A673 (cell line): ENCODE measurements at regions of chr7 and their contacts with region 1.

Region 1: DNA sequence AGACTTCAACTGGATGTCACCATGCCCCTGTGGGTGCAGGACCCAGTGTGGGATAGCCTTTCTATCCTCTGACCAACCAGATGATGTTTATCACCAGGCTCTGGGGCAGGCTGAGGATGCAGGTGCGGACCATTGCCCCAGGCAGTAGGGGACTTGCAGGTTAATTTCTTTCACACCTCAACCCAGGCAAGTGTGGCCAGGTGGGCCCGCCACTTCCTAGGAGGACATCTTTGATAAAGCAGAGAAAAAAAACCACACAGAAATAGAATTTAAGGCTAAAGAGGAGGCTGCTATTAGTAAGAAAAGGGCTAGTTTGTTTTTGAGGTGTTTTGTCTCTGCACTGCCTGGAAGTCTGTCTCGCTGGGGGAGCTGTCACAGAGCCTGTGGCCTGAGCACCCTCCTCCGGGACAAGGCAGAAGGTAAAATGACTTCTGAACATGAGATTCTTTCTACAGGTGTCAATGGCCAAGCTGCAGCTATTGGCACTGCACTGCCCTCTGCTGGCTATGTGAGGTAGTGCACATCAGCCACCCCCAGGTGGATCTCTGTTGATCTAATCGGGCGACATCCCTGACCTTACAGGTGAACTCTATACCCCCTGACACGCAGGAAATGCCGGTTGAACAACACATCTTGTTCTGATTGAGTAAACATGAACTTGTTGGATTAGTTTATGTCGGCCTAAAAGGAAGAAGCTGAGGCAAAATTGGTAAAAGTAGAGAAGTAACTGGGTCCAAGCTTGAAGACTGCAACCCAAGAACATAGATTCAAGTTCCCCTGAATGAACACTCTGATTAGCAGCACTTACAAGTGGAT is 21.0 kb downstream of the UPP1 start:
- DNase-seq: peak; percentile 54
- H3K4me3 ChIP-seq: no peak overlapping the region
- H3K27ac ChIP-seq: no peak overlapping the region
- H3K4me1 ChIP-seq: no peaks in the 10 kb centered on the region
- H3K27me3 ChIP-seq: no peaks in the 10 kb centered on the region
- CTCF ChIP-seq: peak; percentile 98

Region 2: GRCh38 chr7:47991741-47992311 is 118.2 kb before region 1 on chr7:
- CTCF ChIA-PET with region 1: interaction called, 13 read pairs
- POLR2A ChIA-PET with region 1: no interaction called
- intact Hi-C with region 1: loop called (anchors 1 kb)
- DNase-seq: peak; percentile 84
- H3K4me3 ChIP-seq: peak overlapping the region; percentile 40
- H3K27ac ChIP-seq: no peak overlapping the region
- H3K4me1 ChIP-seq: no peaks in the 10 kb centered on the region
- H3K27me3 ChIP-seq: no peaks in the 10 kb centered on the region
- CTCF ChIP-seq: peak; percentile 77

Region 3: GRCh38 chr7:48004638-48005037 is 105.4 kb before region 1 on chr7:
- CTCF ChIA-PET with region 1: no interaction called
- POLR2A ChIA-PET with region 1: no interaction called
- intact Hi-C with region 1: no loop called
- DNase-seq: no peak
- H3K4me3 ChIP-seq: no peak overlapping the region
- H3K27ac ChIP-seq: no peak overlapping the region
- H3K4me1 ChIP-seq: peaks cover 8% of the 10 kb centered on the region
- H3K27me3 ChIP-seq: peaks cover 13% of the 10 kb centered on the region
- CTCF ChIP-seq: no peak

Region 4: GRCh38 chr7:48147078-48147591 is 37.1 kb after region 1 on chr7:
- CTCF ChIA-PET with region 1: no interaction called
- POLR2A ChIA-PET with region 1: no interaction called
- intact Hi-C with region 1: no loop called
- DNase-seq: no peak
- H3K4me3 ChIP-seq: no peak overlapping the region
- H3K27ac ChIP-seq: no peak overlapping the region
- H3K4me1 ChIP-seq: no peaks in the 10 kb centered on the region
- H3K27me3 ChIP-seq: no peaks in the 10 kb centered on the region
- CTCF ChIP-seq: no peak